Transverse colon (tissue), 4 donors: ENCODE measurements at regions of chr3 and their contacts with region 1.

Region 1: GRCh38 chr3:17841190-17841828 is 98.9 kb upstream of the TBC1D5 start:
- DNase-seq: peak; percentile 73
- H3K4me3 ChIP-seq: no peak overlapping the region
- H3K27ac ChIP-seq: no peak overlapping the region
- H3K4me1 ChIP-seq: no peaks in the 10 kb centered on the region
- H3K27me3 ChIP-seq: no peaks in the 10 kb centered on the region
- CTCF ChIP-seq: peak; percentile 86 to 95 (median 92)
- EP300 ChIP-seq: no peak
- POLR2A ChIP-seq: no peak

Region 2: GRCh38 chr3:17258823-17259436 is 582.4 kb before region 1 on chr3:
- in situ Hi-C with region 1: loop called (anchors 25 kb)
- intact Hi-C with region 1: no loop called
- DNase-seq: no peak
- H3K4me3 ChIP-seq: no peak overlapping the region
- H3K27ac ChIP-seq: no peak overlapping the region
- H3K4me1 ChIP-seq: no peaks in the 10 kb centered on the region
- H3K27me3 ChIP-seq: no peaks in the 10 kb centered on the region
- CTCF ChIP-seq: peak; percentile 63 to 73 (median 69)
- EP300 ChIP-seq: no peak
- POLR2A ChIP-seq: no peak

Region 3: DNA sequence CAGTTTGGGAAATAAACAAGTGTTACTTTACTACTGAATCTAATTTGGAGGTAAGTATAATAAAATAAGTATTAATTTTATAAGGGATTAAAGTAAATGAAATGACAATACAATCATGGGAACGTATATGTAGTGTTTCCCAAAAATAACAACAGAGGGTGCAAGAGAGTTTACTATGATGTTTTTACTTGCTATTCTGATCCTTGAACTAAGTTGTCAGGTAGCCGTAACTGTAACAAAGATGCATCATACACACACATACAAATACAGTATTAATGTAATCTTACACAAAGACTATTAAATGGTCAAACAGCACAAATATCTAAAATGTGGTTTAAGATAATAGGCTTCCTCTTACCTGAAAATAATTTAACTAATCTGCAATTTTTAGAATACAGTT is 410.3 kb before region 1 on chr3:
- in situ Hi-C with region 1: loop called (anchors 10 to 25 kb)
- intact Hi-C with region 1: loop called (anchors 10 kb)
- DNase-seq: no peak
- H3K4me3 ChIP-seq: no peak overlapping the region
- H3K27ac ChIP-seq: no peak overlapping the region
- H3K4me1 ChIP-seq: no peaks in the 10 kb centered on the region
- H3K27me3 ChIP-seq: no peaks in the 10 kb centered on the region
- CTCF ChIP-seq: peak; percentile 35 to 47 (median 41)
- EP300 ChIP-seq: no peak
- POLR2A ChIP-seq: no peak

Region 4: DNA sequence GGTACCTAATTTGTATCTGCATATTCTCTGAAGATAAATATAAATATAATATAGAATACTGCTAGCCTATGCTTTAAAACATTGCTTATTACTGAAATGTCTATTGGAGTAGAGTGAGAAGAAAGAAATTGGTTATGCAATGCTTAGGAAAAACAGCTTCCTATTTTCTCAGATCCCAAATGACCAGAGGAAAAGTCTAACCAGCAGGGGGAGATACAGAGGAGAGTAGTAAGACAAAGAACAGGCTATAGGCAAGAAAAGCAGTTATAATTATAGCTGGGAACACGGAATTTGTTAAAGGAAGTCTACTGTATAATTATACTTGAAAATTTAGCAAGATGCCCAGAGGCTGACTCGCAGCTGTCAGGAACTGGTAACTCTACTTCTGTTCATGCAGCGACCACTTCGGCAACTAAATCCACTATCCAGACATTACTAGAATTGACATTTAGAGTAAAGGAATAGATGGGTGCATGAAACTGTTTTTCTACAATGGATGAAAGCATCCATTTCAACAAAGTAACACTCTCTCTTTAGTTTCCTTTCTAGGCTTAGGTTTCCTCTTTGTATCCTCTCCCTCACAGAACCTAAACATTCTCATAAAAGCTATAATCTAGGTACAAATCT is 196.1 kb before region 1 on chr3:
- in situ Hi-C with region 1: loop called (anchors 10 to 25 kb)
- intact Hi-C with region 1: no loop called
- DNase-seq: no peak
- H3K4me3 ChIP-seq: no peak overlapping the region
- H3K27ac ChIP-seq: no peak overlapping the region
- H3K4me1 ChIP-seq: peaks cover 0 to 15% (median 1%) of the 10 kb centered on the region in 4 donors
- H3K27me3 ChIP-seq: no peaks in the 10 kb centered on the region
- CTCF ChIP-seq: peak; percentile 62 to 73 (median 66)
- EP300 ChIP-seq: no peak
- POLR2A ChIP-seq: no peak

Region 5: GRCh38 chr3:17874632-17875031 is 33.3 kb after region 1 on chr3:
- in situ Hi-C with region 1: no loop called
- intact Hi-C with region 1: no loop called
- DNase-seq: no peak
- H3K4me3 ChIP-seq: no peak overlapping the region
- H3K27ac ChIP-seq: no peak overlapping the region
- H3K4me1 ChIP-seq: no peaks in the 10 kb centered on the region
- H3K27me3 ChIP-seq: no peaks in the 10 kb centered on the region
- CTCF ChIP-seq: no peak
- EP300 ChIP-seq: no peak
- POLR2A ChIP-seq: no peak

Region 6: GRCh38 chr3:18389108-18389733 is 547.9 kb after region 1 on chr3:
- in situ Hi-C with region 1: no loop called
- intact Hi-C with region 1: no loop called
- DNase-seq: no peak
- H3K4me3 ChIP-seq: no peak overlapping the region
- H3K27ac ChIP-seq: no peak overlapping the region
- H3K4me1 ChIP-seq: peaks cover 0 to 6% (median 0%) of the 10 kb centered on the region in 4 donors
- H3K27me3 ChIP-seq: no peaks in the 10 kb centered on the region
- CTCF ChIP-seq: peak; percentile 38 to 61 (median 55)
- EP300 ChIP-seq: no peak
- POLR2A ChIP-seq: no peak